Right ventricle myocardium inferior (tissue), 1 donor: ENCODE measurements at regions of chr11 and their contacts with region 1.

Region 1: GRCh38 chr11:124070915-124071635 is 29.9 kb upstream of the OR10G7 start:
- DNase-seq: no peak
- ATAC-seq: no peak

Region 2: GRCh38 chr11:124012697-124013096 is 58.4 kb before region 1 on chr11 and contains the start of gene OR10G4:
- intact Hi-C with region 1: no loop called
- DNase-seq: no peak
- ATAC-seq: no peak
- total RNA-seq, gene OR10G4: not detected

Region 3: GRCh38 chr11:124050748-124051147 is 20.3 kb before region 1 on chr11:
- intact Hi-C with region 1: no loop called
- DNase-seq: no peak
- ATAC-seq: no peak

Region 4: DNA sequence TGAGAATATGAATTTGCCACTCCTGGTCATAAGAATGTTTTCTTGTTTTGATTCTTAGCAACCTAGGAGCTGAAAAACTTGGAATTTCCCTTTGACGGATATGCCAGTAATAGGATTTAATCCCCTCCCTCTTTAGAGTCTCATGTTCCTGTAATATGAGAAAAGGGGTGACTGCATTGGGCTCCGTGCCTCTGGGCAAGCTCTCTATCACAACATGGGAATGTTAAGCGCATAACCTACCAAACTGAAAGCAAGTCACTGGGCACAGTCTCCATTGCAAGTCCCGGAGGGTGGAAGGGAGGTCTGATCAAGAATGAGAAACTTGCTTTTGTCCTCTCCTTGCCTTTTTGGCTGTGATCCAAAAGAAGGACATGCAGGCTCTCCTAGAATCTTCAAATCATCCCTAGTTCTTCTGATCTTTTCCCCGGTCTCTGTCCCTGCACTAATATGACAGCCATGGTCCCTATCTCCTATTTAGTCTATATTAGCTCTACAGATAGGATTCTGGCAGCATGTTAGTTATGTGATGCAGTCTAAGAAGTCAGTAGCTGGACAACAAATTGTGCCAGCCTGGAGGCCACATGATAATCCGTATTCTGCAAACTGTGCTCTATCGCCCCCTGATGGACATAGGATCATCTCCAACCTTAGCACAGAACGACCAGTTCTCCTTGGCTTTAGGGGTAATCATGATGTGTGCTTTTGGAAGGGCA is 123.8 kb after region 1 on chr11:
- intact Hi-C with region 1: loop called (anchors 10 kb)
- DNase-seq: no peak
- ATAC-seq: peak; percentile 46

Region 5: GRCh38 chr11:124586238-124586860 is 515.3 kb after region 1 on chr11:
- intact Hi-C with region 1: loop called (anchors 10 kb)
- DNase-seq: peak; percentile 71
- ATAC-seq: no peak